ENCODE measurements at regions of chr3 and their contacts with region 1.

Region 1: DNA sequence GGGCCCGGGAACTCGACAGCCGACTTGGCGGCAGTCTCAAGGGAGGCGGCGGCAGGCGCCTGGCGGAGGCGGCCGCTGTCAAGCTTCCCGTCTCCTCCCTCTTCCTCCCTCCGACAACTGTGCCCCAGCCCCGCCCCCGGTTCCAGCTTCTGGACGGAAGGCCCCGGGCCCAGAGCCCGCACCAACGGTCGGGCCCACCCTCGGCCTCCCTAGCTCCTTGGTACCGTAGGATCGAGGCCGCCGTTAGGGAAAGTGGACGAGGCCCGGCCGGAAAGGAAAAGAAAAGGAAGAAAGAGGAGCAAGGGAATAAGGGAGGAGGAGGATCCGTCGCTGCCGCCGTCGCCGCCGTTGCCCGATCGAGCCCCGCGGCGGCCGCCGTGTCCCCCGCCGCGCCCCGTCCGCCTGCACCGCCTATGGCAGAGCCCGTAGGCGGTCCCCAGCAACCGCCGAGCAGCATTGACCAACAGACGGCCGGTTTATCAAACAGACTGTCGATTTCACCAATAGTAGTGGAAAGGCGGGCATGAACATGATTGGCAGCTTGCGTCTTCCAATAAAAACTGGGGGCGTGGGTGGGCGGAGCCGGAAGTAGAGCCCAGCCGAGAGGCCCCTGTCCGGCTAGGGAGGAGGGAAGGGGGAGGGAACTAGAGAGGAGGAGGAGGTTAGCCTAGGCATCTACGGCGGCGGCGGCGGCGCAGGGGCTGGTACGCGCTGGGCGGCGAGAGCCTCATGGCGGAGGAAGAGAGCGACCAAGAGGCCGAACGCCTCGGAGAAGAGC is at the starts of genes CGGBP1 and ZNF654:
- DNase-seq: peak; percentile 98
- H3K4me3 Mint-ChIP-seq: peak within 1 kb of the TSS; percentile 96
- H3K27ac Mint-ChIP-seq: peak within 1 kb of the TSS; percentile 83
- H3K4me1 Mint-ChIP-seq: no peaks in the 10 kb centered on the region
- H3K27me3 Mint-ChIP-seq: no peaks in the 10 kb centered on the region
- CTCF ChIP-seq: no peak
- total RNA-seq, gene CGGBP1: 70.0 and 76.9 TPM in 2 replicates
- total RNA-seq, gene ZNF654: 12.9 and 14.1 TPM in 2 replicates

Region 2: GRCh38 chr3:88038566-88038965 is 20.2 kb before region 1 on chr3:
- CTCF ChIA-PET with region 1: interaction called, 10 read pairs
- intact Hi-C with region 1: no loop called
- DNase-seq: no peak
- H3K4me3 Mint-ChIP-seq: no peak overlapping the region
- H3K27ac Mint-ChIP-seq: no peak overlapping the region
- H3K4me1 Mint-ChIP-seq: no peaks in the 10 kb centered on the region
- H3K27me3 Mint-ChIP-seq: no peaks in the 10 kb centered on the region
- CTCF ChIP-seq: no peak

Region 3: GRCh38 chr3:88113311-88114162 is 54.8 kb after region 1 on chr3:
- CTCF ChIA-PET with region 1: no interaction called
- intact Hi-C with region 1: loop called (anchors 1 kb)
- DNase-seq: peak; percentile 69
- H3K4me3 Mint-ChIP-seq: no peak overlapping the region
- H3K27ac Mint-ChIP-seq: no peak overlapping the region
- H3K4me1 Mint-ChIP-seq: no peaks in the 10 kb centered on the region
- H3K27me3 Mint-ChIP-seq: no peaks in the 10 kb centered on the region
- CTCF ChIP-seq: peak; percentile 63

Region 4: DNA sequence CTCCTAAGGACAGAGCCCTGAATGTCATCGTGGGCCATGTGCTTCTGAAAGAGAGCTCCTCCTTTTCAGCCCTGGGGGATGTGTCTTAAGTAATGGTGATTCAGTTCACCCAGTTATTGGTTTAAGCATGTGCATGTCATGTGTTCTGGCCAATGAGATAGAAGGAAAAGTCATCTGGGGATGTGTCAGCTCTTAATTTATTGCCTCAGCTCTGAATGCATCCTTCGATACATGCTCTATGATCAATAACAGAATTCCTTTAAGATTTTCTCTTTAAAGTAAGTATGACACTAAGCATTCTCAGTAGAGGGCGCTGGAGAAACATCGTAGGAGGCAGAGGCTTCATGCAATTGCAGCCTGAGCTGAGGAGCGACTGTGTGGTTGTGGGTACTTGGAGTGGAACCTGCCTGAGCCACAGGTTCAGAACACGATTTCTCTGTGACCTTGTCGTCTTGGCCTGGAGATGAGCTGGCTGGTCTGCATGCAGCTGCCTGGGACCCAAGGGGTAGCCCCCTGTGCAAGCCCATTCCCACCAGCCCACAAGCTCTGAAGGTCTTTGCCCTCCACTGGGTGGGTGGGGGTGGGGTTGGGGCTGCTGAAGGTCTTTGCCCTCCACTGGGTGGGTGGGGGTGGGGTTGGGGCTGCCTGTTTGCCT is 160.5 kb after region 1 on chr3:
- CTCF ChIA-PET with region 1: no interaction called
- intact Hi-C with region 1: no loop called
- DNase-seq: peak; percentile 75
- H3K4me3 Mint-ChIP-seq: no peak overlapping the region
- H3K27ac Mint-ChIP-seq: no peak overlapping the region
- H3K4me1 Mint-ChIP-seq: no peaks in the 10 kb centered on the region
- H3K27me3 Mint-ChIP-seq: no peaks in the 10 kb centered on the region
- CTCF ChIP-seq: peak; percentile 58